ENCODE measurements at regions of chr5 and their contacts with region 1.

Region 1: DNA sequence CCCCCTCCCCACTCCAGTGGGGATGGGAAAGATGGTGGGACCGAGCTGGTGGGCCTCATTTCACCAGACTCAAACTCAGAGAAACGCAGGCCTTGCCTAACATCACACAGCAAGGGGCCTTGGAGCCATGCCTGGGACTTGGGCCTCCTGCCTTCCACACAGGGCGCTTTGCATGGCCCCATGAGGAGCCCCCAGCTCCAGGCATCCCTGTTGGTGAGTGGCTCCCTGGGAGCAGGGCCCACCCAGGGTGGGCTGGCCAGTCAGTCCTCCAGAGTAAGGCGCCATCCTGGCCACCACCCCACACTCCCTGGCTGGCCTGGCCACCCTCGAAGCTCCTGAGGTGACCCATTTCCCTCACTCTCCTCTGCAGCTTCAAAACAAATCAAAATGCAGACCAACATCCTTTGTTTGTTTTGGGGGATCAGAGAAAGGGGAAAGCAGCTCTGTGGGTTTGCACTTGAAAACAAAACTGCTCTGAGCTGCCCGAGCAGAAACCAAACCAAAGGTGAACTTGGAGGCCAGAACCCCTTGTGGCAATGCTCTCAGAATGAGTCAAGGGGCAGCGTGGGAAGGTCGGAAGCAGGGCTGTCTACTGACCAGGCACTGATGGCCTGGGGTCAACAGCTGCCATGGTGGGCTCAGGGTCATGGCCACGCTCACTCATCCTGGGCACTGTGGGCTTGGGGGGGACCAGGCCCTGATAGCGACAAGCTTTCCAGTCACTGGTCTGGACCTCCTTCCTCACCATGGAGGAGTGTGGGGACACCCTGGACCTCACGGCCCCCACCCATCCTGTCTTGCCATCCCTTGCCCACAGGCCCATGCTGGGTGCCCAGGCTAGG is 37.0 kb upstream of the VDAC1 start:
- DNase-seq: no peak
- H3K4me3 Mint-ChIP-seq: no peak overlapping the region
- H3K27ac Mint-ChIP-seq: no peak overlapping the region
- H3K4me1 Mint-ChIP-seq: peaks cover 23% of the 10 kb centered on the region
- H3K27me3 Mint-ChIP-seq: no peaks in the 10 kb centered on the region
- CTCF ChIP-seq: no peak

Region 2: GRCh38 chr5:134026521-134027268 is 15.1 kb before region 1 on chr5:
- CTCF ChIA-PET with region 1: interaction called, 15 read pairs
- intact Hi-C with region 1: no loop called
- DNase-seq: peak; percentile 82
- H3K4me3 Mint-ChIP-seq: no peak overlapping the region
- H3K27ac Mint-ChIP-seq: no peak overlapping the region
- H3K4me1 Mint-ChIP-seq: peaks cover 28% of the 10 kb centered on the region
- H3K27me3 Mint-ChIP-seq: no peaks in the 10 kb centered on the region
- CTCF ChIP-seq: peak; percentile 59

Region 3: GRCh38 chr5:134092878-134093277 is 51.1 kb after region 1 on chr5:
- CTCF ChIA-PET with region 1: interaction called, 14 read pairs
- intact Hi-C with region 1: loop called (anchors 5 kb)
- DNase-seq: peak; percentile 65
- H3K4me3 Mint-ChIP-seq: peak overlapping the region; percentile 17
- H3K27ac Mint-ChIP-seq: peak overlapping the region; percentile 14
- H3K4me1 Mint-ChIP-seq: peaks cover 26% of the 10 kb centered on the region
- H3K27me3 Mint-ChIP-seq: no peaks in the 10 kb centered on the region
- CTCF ChIP-seq: no peak

Region 4: DNA sequence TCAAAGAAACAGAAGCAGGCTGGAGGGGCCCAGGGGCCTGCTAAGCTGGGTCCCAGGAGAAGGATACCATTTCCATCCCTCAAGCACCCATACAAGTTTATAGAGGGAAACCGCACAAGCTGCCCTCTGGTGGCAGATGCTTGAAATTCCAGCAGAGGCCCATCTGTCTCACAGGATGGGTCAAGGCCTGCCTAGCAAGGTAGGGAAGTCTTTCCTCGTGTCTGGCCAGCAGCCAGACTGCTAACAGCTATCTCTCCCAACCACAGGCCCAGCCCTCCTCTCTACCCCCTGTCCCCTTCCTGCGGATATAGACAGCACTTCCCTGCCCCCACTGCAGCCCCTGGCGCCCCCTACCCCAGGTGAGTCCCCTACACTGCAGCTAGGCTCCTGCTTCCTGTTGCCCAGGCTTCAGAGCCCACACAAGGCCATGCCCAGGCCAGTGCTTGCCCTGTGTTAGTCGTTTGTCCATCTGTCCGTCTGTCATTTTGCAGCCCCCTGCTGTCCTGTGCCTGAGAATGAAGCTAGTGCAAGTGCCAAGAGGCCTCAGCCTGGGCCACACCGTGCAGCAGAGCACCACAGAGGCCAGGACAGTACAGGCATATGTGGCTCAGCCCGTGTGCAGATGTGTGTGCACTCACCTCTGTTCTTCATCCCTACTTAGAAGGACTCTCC is 98.9 kb after region 1 on chr5:
- CTCF ChIA-PET with region 1: interaction called, 126 read pairs
- intact Hi-C with region 1: loop called (anchors 1 kb)
- DNase-seq: peak; percentile 78
- H3K4me3 Mint-ChIP-seq: no peak overlapping the region
- H3K27ac Mint-ChIP-seq: no peak overlapping the region
- H3K4me1 Mint-ChIP-seq: peaks cover 16% of the 10 kb centered on the region
- H3K27me3 Mint-ChIP-seq: no peaks in the 10 kb centered on the region
- CTCF ChIP-seq: peak; percentile 94

Measured in Calu3 (cell line).